ENCODE measurements at regions of chr7 and their contacts with region 1.

Region 1: DNA sequence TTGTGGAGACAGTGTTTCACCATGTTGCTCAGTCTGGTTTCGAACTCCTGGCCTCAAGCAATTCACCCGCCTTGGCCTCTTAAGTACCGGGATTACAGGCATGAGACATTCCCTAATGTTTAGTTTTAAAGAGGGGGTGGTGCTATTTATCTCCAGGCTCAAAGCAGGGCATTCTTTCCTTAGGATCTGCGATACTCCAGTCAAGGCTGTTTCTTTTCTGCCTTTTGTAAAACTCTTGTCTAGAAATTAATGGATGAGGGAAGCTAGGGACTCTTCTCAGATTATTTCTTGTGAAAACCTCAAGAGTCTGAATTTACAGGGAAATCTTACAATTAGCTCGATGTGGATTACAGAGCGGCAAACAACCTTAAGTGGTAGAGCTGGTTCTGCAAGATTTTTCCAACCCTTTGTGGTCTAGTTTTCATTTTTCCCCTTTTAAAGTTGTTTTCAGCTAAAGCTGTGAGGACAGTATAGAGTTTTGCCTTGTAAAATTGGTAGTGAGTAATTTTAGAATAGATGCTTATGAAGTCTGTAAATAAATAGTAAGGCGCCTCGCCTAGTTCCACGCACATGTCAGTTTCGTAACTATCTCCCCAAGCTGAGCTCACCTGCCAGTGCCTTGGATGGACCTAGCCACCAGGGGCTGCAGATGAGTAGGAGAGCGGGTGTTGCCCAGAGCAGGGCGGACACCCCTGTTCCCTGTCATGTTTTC is 53.1 kb downstream of the CUX1 start:
- DNase-seq: peak; percentile 60
- H3K4me3 Mint-ChIP-seq: peak overlapping the region; percentile 55
- H3K27ac Mint-ChIP-seq: peak overlapping the region; percentile 81
- H3K4me1 Mint-ChIP-seq: peaks cover 36% of the 10 kb centered on the region
- H3K27me3 Mint-ChIP-seq: no peaks in the 10 kb centered on the region
- CTCF ChIP-seq: peak; percentile 31

Region 2: GRCh38 chr7:101953248-101953819 is 82.8 kb after region 1 on chr7:
- CTCF ChIA-PET with region 1: no interaction called
- intact Hi-C with region 1: loop called (anchors 10 kb)
- DNase-seq: no peak
- H3K4me3 Mint-ChIP-seq: peak overlapping the region; percentile 32
- H3K27ac Mint-ChIP-seq: peak overlapping the region; percentile 91
- H3K4me1 Mint-ChIP-seq: peaks cover 18% of the 10 kb centered on the region
- H3K27me3 Mint-ChIP-seq: no peaks in the 10 kb centered on the region
- CTCF ChIP-seq: no peak

Region 3: GRCh38 chr7:102008535-102009345 is 138.2 kb after region 1 on chr7:
- CTCF ChIA-PET with region 1: no interaction called
- intact Hi-C with region 1: no loop called
- DNase-seq: peak; percentile 5
- H3K4me3 Mint-ChIP-seq: no peak overlapping the region
- H3K27ac Mint-ChIP-seq: no peak overlapping the region
- H3K4me1 Mint-ChIP-seq: peaks cover 13% of the 10 kb centered on the region
- H3K27me3 Mint-ChIP-seq: no peaks in the 10 kb centered on the region
- CTCF ChIP-seq: no peak